ENCODE measurements at regions of chr2 and their contacts with region 1.

Region 1: DNA sequence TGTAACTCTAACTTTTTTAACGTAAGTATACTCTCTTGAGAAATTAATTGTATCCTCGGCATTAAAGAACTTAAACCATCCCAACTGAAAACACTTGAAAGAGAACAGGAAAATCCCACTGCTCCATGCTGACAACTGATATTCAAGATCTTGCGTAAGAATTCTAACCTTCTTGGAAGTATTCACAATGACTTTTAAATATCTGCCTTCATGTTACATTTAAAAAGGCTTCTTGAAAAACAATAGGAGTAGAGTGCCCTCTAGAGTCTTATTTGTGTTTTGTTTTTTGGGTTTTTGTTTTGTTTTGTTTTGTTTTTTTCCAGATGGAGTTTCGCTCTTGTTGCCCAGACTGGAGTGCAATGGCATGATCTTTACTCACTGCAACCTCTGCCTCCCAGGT is 65.4 kb upstream of the DNAJC10 start:
- DNase-seq: peak in 2 of 4 donors; percentile 29 to 57
- ATAC-seq: peak; percentile 81
- H3K4me3 ChIP-seq: no peak overlapping the region
- H3K27ac ChIP-seq: no peak overlapping the region
- H3K4me1 ChIP-seq: peaks cover 0 to 5% of the 10 kb centered on the region in 2 donors
- H3K27me3 ChIP-seq: no peaks in the 10 kb centered on the region
- CTCF ChIP-seq: peak; percentile 24 to 33

Region 2: GRCh38 chr2:182186132-182186735 is 464.5 kb before region 1 on chr2:
- intact Hi-C with region 1: loop called in 1 of 2 experiments (anchors 5 kb)
- DNase-seq: peak in 2 of 4 donors; percentile 22 to 28
- ATAC-seq: peak; percentile 78
- H3K4me3 ChIP-seq: no peak overlapping the region
- H3K27ac ChIP-seq: no peak overlapping the region
- H3K4me1 ChIP-seq: no peaks in the 10 kb centered on the region
- H3K27me3 ChIP-seq: no peaks in the 10 kb centered on the region
- CTCF ChIP-seq: peak; percentile 69 to 82

Measured in left lung (tissue), 14 donors.